A549 (cell line): ENCODE measurements at regions of chr14 and their contacts with region 1.

Region 1: GRCh38 chr14:69346710-69347109 is 51.4 kb downstream of the ERH start:
- DNase-seq: peak; percentile 40 to 65
- ATAC-seq: peak; percentile 73 to 94
- H3K4me3 ChIP-seq: no peak overlapping the region
- H3K27ac ChIP-seq: no peak overlapping the region
- H3K4me1 ChIP-seq: no peaks in the 10 kb centered on the region
- CTCF ChIP-seq: peak; percentile 57
- EP300 ChIP-seq: no peak
- POLR2A ChIP-seq: no peak
- RAD21 ChIP-seq: peak; percentile 53 to 60; a peak in 4 of 5 replicates

Region 2: DNA sequence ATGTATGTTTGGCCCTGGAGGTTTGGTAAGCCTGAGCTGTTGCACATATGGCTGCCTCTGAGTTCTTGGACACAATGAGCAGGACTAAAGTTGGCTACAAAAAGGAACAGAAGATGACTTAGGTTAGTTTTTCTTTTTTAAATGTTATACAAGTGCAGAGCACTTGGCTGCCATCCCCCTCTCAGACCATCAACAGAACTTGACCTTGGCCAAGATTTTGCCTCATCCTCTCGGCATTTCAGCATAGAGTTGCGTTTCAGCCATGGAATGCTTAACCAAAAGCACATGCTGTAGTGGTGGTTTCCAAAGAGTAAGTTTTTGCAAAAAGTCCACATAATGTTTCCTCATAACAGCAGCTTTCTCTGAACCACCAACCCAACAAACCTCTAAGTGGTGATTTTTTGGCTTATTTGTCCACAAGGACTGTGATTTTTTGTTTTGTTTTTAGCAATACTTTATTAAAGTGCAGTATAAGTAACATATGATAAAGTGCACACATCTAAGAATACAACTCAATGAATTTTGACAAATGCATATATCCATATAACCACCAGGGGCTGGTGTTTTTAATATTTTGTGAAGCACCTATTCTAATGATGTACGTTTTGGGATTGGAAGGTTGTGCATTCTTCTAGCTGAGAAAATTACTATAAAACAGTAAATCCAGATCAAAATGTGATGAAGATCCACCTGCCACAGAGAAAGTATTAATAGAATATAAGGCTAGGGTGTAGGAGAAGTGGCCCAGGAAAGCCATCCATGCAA is 98.9 kb before region 1 on chr14:
- CTCF ChIA-PET with region 1: interaction called, 50 read pairs
- POLR2A ChIA-PET with region 1: no interaction called
- DNase-seq: no peak
- ATAC-seq: peak in 1 of 2 experiments; percentile 41; a peak in 1 of 6 replicates
- H3K4me3 ChIP-seq: no peak overlapping the region
- H3K27ac ChIP-seq: no peak overlapping the region
- H3K4me1 ChIP-seq: no peaks in the 10 kb centered on the region; the same call in 2 of the 3 replicates
- CTCF ChIP-seq: no peak; the same call in 2 of the 3 replicates
- EP300 ChIP-seq: no peak
- POLR2A ChIP-seq: no peak
- RAD21 ChIP-seq: no peak

Region 3: DNA sequence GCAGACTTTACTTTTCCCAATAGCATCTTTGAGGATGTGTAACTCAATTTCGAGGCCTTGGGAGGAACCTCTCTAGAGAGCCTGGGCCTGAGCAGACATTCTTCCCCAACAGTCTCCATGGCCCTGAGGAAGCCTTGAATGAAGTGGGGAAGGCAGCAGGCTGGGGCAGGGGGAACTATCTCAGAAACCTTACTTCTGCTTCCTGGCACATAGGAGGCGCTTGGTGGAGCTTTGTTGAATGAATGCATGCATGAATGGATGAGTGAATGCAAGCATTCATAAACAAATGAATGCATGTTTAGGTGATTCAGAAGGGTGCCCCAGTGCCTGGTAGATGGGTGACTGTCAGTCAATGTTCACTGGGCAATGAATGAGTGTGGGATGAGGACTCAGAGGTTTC is 28.5 kb before region 1 on chr14:
- CTCF ChIA-PET with region 1: interaction called, 10 read pairs
- POLR2A ChIA-PET with region 1: no interaction called
- DNase-seq: no peak
- ATAC-seq: no peak
- H3K4me3 ChIP-seq: no peak overlapping the region
- H3K27ac ChIP-seq: peak overlapping the region; percentile 67 to 73
- H3K4me1 ChIP-seq: peaks cover 40% of the 10 kb centered on the region
- CTCF ChIP-seq: no peak
- EP300 ChIP-seq: no peak
- POLR2A ChIP-seq: no peak
- RAD21 ChIP-seq: no peak

Region 4: DNA sequence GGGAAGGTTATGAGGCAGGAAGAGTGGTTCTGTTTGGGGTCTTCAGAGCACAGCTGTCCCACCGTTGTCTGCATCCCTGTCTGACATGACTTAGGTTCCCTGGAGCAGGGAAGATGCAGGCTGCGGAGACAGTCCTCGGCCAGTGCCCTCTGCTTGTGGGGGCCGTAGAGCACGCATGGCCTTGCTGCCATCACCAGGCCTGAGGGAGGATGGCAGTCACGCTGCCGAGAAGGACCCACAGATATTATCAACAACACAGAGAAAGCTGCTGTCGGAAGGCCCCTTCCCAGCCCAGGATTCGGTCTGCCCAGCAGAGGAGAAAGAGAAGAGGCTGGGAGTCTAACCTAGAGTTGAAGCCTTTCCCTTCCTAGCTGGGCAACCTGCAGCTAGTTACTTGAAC is 16.3 kb after region 1 on chr14:
- CTCF ChIA-PET with region 1: interaction called, 35 read pairs
- POLR2A ChIA-PET with region 1: no interaction called
- DNase-seq: peak in 1 of 2 experiments; percentile 14
- ATAC-seq: peak; percentile 37 to 68; a peak in 3 of 6 replicates
- H3K4me3 ChIP-seq: no peak overlapping the region
- H3K27ac ChIP-seq: no peak overlapping the region
- H3K4me1 ChIP-seq: no peaks in the 10 kb centered on the region
- CTCF ChIP-seq: no peak
- EP300 ChIP-seq: no peak
- POLR2A ChIP-seq: no peak
- RAD21 ChIP-seq: peak; percentile 23 to 54; a peak in 3 of 5 replicates

Region 5: DNA sequence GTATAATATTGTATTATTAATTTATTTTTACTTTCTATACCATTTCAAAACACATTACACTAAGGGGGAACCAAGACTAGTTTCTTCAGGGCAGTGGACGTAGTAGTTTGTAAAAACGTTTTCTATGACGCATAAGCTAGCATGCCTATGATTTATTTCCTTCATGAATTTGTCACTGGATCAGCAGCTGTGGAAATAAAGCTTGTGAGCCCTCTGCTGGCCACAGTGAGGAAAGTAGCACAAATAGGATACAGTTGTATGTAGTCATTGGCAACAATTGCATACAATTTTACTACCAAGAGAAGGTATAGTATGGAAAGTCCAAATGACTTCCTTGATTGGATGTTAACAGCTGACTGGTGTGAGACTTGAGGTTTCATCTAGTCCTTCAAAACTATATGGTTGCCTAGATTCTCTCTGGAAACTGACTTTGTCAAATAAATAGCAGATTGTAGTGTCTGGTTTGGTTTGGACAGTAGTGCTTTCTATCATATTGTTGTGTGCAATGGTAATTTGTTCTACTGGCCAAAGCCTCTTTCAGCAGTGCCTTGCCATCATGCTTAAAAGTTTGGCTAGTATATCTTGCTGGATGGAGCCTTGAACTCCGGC is 113.5 kb after region 1 on chr14:
- CTCF ChIA-PET with region 1: interaction called, 16 read pairs
- POLR2A ChIA-PET with region 1: no interaction called
- DNase-seq: peak; percentile 79 to 85
- ATAC-seq: peak; percentile 98
- H3K4me3 ChIP-seq: no peak overlapping the region
- H3K27ac ChIP-seq: no peak overlapping the region
- H3K4me1 ChIP-seq: no peaks in the 10 kb centered on the region
- CTCF ChIP-seq: peak; percentile 84
- EP300 ChIP-seq: no peak
- POLR2A ChIP-seq: no peak
- RAD21 ChIP-seq: peak; percentile 75 to 80

Region 6: DNA sequence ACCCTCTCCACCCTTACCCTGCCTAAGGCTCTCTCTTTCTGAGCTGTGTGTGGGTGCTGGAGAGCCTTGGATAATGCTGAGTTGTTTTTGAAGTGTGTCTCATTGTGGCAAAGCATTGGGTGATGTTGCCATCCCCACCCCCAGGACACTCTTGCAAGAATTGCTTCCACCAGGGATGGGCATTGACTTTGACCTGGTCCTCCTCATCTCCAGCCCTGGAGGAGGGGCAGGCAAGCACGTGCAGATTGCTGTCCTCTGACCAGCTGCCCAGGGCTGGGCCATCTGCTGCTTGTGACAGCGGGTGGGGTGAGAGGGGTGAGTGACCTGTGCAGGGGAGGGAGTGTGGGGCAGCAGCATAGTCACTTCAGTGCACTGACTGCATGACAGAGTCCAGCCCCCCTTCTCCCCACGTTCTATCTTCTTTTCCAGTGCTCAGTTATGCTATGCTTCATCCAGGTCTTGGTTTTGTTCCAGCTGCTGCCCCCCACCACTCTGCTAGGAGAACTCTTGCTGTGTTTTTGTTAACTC is 290.9 kb after region 1 on chr14:
- CTCF ChIA-PET with region 1: no interaction called
- POLR2A ChIA-PET with region 1: no interaction called
- DNase-seq: no peak
- ATAC-seq: peak; percentile 30 to 47; a peak in 5 of 6 replicates
- H3K4me3 ChIP-seq: no peak overlapping the region
- H3K27ac ChIP-seq: peak overlapping the region in 1 of 2 experiments; percentile 48; a peak in 3 of 6 replicates
- H3K4me1 ChIP-seq: peaks cover 23% of the 10 kb centered on the region
- CTCF ChIP-seq: no peak
- EP300 ChIP-seq: no peak
- POLR2A ChIP-seq: no peak
- RAD21 ChIP-seq: no peak

Region 7: GRCh38 chr14:69937367-69938081 is 590.8 kb after region 1 on chr14:
- CTCF ChIA-PET with region 1: no interaction called
- POLR2A ChIA-PET with region 1: no interaction called
- DNase-seq: no peak
- ATAC-seq: no peak
- H3K4me3 ChIP-seq: no peak overlapping the region
- H3K27ac ChIP-seq: peak overlapping the region in 1 of 2 experiments; percentile 30; a peak in 1 of 6 replicates
- H3K4me1 ChIP-seq: peaks cover 17% of the 10 kb centered on the region
- CTCF ChIP-seq: no peak
- EP300 ChIP-seq: no peak
- POLR2A ChIP-seq: no peak
- RAD21 ChIP-seq: no peak

Region 8: DNA sequence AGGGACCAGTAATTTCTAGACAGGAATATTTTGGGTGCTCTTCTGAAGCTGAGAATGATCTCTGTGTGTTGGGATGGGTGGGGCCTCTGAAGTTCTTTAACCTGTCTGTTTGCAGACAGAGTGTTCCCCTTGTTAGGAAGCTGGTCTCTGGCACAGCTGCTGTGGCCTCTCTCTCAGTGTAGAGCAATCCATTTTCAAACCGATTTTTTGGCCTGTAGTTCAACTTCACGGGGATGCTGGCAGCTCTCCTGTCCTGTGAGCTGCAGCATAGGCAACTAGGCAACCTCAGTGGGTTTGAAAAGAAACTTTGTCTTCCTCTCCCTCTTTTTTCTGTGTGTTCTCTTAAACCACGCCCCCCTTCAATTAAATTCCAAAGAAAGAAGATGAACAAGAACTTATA is 601.6 kb after region 1 on chr14:
- CTCF ChIA-PET with region 1: no interaction called
- POLR2A ChIA-PET with region 1: no interaction called
- DNase-seq: no peak
- ATAC-seq: no peak
- H3K4me3 ChIP-seq: no peak overlapping the region
- H3K27ac ChIP-seq: no peak overlapping the region
- H3K4me1 ChIP-seq: peaks cover 3% of the 10 kb centered on the region
- CTCF ChIP-seq: no peak
- EP300 ChIP-seq: no peak
- POLR2A ChIP-seq: no peak
- RAD21 ChIP-seq: no peak